ENCODE measurements at regions of chr1 and their contacts with region 1.

Region 1: GRCh38 chr1:203625628-203626019 is 1.0 kb upstream of the ATP2B4 start:
- DNase-seq: peak in 2 of 5 donors; percentile 29 to 54
- H3K4me3 ChIP-seq: peak overlapping the region; percentile 78
- H3K27ac ChIP-seq: no peak overlapping the region
- H3K4me1 ChIP-seq: peaks cover 11% of the 10 kb centered on the region
- H3K27me3 ChIP-seq: no peaks in the 10 kb centered on the region
- CTCF ChIP-seq: peak in 2 of 3 donors; percentile 36 to 37
- EP300 ChIP-seq: no peak
- POLR2A ChIP-seq: no peak

Region 2: GRCh38 chr1:203340112-203340804 is 285.4 kb before region 1 on chr1:
- intact Hi-C with region 1: loop called in 1 of 4 experiments (anchors 5 kb)
- DNase-seq: peak; percentile 75 to 83 (median 79)
- H3K4me3 ChIP-seq: no peak overlapping the region
- H3K27ac ChIP-seq: peak overlapping the region; percentile 67 to 74
- H3K4me1 ChIP-seq: peaks cover 7% of the 10 kb centered on the region
- H3K27me3 ChIP-seq: no peaks in the 10 kb centered on the region
- CTCF ChIP-seq: peak; percentile 83 to 92 (median 90)
- EP300 ChIP-seq: no peak
- POLR2A ChIP-seq: no peak

Region 3: GRCh38 chr1:203368624-203369451 is 256.8 kb before region 1 on chr1:
- intact Hi-C with region 1: no loop called
- DNase-seq: peak; percentile 65 to 91 (median 78)
- H3K4me3 ChIP-seq: no peak overlapping the region
- H3K27ac ChIP-seq: peak overlapping the region; percentile 50 to 71
- H3K4me1 ChIP-seq: peaks cover 8% of the 10 kb centered on the region
- H3K27me3 ChIP-seq: no peaks in the 10 kb centered on the region
- CTCF ChIP-seq: peak; percentile 17 to 90 (median 89)
- EP300 ChIP-seq: peak; percentile 69
- POLR2A ChIP-seq: peak; percentile 27

Region 4: DNA sequence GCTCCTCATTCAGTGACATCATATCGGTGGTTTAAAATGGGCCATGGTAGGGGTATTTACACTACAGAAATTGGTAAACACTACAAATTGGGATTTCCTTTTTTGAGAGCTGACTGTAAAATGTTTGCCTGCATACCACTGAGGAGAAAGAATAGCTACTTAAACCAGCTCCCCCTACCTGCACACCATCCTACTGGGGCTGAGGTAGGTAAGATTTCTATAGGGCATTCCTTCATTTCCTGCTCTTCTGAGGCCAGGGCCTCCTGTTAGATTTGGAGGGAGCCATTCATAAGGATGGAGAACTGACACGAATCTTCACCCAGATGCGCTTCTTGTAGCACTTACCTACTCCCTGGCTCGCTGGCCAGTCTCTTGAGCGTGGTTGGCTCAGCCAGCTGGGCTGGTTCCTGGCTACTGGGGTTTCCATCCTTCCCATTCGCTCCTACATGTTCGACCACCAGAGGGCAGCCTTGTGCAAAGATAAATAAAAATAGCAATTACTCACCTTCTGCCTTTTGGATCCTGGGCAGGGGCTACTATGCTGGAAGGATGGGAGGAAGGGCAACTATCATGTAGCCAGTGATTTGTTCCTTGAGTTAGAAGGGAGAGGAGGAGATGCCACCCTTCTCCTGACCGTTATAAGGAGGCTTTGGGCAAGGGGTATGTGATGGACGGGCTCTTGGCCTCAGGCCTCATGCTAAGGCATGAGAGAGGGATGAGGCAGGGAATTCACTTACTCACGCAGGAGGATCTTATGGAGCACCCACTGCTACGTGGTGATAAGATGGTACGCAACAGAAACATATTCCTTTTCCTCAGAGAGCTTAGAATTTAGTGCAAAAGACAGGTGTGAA is 121.0 kb before region 1 on chr1:
- intact Hi-C with region 1: loop called (anchors 5 to 10 kb)
- DNase-seq: peak; percentile 77 to 89 (median 86)
- H3K4me3 ChIP-seq: no peak overlapping the region
- H3K27ac ChIP-seq: no peak overlapping the region
- H3K4me1 ChIP-seq: peaks cover 12% of the 10 kb centered on the region
- H3K27me3 ChIP-seq: no peaks in the 10 kb centered on the region
- CTCF ChIP-seq: peak; percentile 68 to 90 (median 86)
- EP300 ChIP-seq: no peak
- POLR2A ChIP-seq: no peak

Region 5: DNA sequence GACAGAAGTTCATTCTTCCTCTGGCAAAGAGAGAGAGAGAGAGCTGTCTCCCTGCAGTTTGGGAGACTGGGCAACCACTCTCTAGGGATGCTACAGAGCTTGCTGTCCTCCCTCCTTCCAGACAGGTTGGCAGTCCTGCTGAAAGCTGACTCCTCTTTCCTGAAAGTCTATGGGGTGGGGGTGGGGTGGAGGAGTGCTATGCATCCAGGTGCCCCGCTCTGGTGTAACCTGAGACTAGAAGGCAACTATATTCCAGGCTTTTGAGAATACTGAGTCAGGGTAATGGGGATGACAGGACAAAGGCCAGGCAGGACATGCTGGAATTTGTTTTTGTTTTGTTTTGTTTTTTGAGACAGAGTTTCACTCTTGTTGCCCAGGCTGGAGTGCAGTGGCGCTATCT is 76.3 kb before region 1 on chr1:
- intact Hi-C with region 1: loop called in 1 of 4 experiments (anchors 10 kb)
- DNase-seq: no peak
- H3K4me3 ChIP-seq: no peak overlapping the region
- H3K27ac ChIP-seq: no peak overlapping the region
- H3K4me1 ChIP-seq: no peaks in the 10 kb centered on the region
- H3K27me3 ChIP-seq: no peaks in the 10 kb centered on the region
- CTCF ChIP-seq: no peak
- EP300 ChIP-seq: no peak
- POLR2A ChIP-seq: no peak

Region 6: GRCh38 chr1:203692565-203693470 is 67.2 kb after region 1 on chr1:
- intact Hi-C with region 1: loop called (anchors 2 to 5 kb)
- DNase-seq: peak; percentile 91 to 95 (median 92)
- H3K4me3 ChIP-seq: no peak overlapping the region
- H3K27ac ChIP-seq: peak overlapping the region; percentile 63 to 78
- H3K4me1 ChIP-seq: peaks cover 40% of the 10 kb centered on the region
- H3K27me3 ChIP-seq: no peaks in the 10 kb centered on the region
- CTCF ChIP-seq: peak in 2 of 3 donors; percentile 18 to 37
- EP300 ChIP-seq: no peak
- POLR2A ChIP-seq: no peak

Region 7: DNA sequence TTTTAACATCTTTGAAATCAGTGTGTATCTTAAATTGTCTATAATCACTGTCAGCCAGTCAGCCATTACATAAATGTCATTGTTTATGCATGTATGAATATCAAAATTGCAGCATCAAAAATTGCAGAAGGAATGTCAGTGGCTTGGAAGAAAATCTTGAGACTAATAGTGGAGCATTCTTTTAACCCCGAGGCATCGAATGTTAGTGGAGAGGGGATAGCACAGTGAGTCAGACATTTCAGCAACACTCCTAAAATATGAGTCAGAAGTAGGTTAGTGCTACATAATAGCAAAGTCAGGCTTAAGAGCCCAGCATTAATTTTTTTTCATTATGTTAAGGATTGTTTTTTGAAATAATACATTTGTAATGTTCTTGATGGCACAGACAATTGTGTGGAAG is 281.3 kb after region 1 on chr1:
- intact Hi-C with region 1: no loop called
- DNase-seq: no peak
- H3K4me3 ChIP-seq: no peak overlapping the region
- H3K27ac ChIP-seq: no peak overlapping the region
- H3K4me1 ChIP-seq: no peaks in the 10 kb centered on the region
- H3K27me3 ChIP-seq: no peaks in the 10 kb centered on the region
- CTCF ChIP-seq: no peak
- EP300 ChIP-seq: no peak
- POLR2A ChIP-seq: no peak